Activated CD4-positive, alpha-beta T cell treated with anti-CD3 and anti-CD28 coated beads for 36 hours (primary cell): ENCODE measurements at regions of chr1 and their contacts with region 1.

Region 1: DNA sequence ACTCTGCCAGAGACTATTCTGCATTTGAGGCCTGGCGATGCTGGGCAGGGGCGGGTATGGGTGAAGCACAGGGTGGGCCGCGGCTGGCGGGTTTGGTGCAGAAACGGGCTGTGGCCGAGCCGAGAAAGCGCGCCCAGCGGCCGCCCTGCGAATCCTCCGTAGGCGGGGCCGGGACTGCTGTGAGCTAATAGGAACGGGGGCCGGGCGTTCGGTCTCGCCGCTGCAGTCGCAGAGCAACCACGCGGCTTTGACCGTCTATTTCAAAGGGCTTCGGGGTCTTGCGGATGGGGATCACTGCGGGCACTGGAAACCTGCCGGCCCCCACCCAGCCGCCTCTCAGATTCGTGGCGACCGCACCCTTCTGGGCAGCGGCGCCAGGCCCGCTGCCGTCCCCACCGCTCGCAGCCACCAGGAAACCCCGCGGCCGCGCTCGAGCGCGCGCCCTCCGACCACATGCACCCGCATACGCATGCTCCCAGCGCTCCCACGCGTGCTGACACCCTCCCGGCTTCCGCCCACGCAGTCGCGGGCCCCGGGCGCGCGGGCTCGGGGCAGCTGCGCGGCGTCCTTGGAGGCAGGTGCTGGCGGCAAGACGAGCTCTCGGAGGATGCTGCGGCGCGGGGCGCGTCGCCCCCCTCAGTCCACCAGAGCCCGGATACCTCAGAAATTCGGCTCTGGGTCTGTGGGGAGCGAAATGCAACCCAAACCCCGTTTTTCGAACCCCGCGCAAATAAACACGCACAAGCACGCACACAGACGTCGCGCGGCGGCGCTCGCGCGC is 32.6 kb downstream of the DNTTIP2 start:
- DNase-seq: peak; percentile 87
- ATAC-seq: peak; percentile 26
- H3K4me3 Mint-ChIP-seq: peak overlapping the region; percentile 90
- H3K27ac Mint-ChIP-seq: peak overlapping the region; percentile 88
- H3K4me1 Mint-ChIP-seq: peaks cover 20% of the 10 kb centered on the region
- H3K27me3 Mint-ChIP-seq: no peaks in the 10 kb centered on the region

Region 2: DNA sequence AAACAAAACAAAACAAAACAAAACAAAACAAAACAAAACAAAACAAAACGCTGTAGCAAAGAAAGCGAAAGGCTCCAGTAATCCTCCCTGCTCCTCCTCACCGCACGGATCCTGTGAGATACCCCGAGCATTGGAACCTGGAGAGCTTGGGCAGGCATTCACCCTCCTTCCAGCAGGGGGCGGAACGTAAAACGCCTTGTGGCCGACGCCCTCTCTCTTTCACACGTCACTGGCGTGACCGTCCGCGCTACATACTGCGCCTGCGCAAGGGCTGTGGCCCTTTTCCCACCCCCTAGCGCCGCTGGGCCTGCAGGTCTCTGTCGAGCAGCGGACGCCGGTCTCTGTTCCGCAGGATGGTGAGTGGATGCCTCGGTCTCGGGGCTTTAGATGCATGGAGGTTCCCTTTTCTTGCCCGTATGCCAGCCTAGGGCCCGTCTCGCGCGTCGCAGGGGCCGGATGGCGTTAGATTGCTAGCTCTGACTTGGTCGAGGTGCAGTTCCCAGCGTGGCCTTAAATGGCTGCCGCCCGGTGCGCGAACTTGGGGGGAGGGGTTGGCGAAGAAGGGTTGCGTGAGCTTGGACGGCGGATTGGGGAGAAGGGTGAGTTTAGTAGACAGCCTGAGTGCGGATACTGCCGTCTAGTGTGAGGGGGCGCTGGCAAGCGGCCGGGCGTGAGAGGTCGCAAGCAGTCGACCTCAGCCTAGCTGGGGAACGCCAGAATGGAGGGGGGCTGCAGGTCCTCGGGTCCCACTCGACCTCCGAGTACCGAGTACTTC is 1014.5 kb before region 1 on chr1 and contains the start of gene RPL5:
- CTCF ChIA-PET with region 1: no interaction called
- POLR2A ChIA-PET with region 1: no interaction called
- intact Hi-C with region 1: loop called in 1 of 2 experiments (anchors 10 kb)
- DNase-seq: peak; percentile 98
- ATAC-seq: peak; percentile 88
- H3K4me3 Mint-ChIP-seq: peak within 1 kb of the TSS; percentile 84
- H3K27ac Mint-ChIP-seq: peak within 1 kb of the TSS; percentile 95
- H3K4me1 Mint-ChIP-seq: peaks cover 35% of the 10 kb centered on the region
- H3K27me3 Mint-ChIP-seq: no peaks in the 10 kb centered on the region
- total RNA-seq, gene RPL5: 1,359 to 1,602 TPM

Region 3: GRCh38 chr1:93304716-93305138 is 541.7 kb before region 1 on chr1:
- CTCF ChIA-PET with region 1: interaction called, 4 read pairs
- POLR2A ChIA-PET with region 1: no interaction called
- intact Hi-C with region 1: loop called in 1 of 2 experiments (anchors 10 kb)
- DNase-seq: peak; percentile 43
- ATAC-seq: peak; percentile 44
- H3K4me3 Mint-ChIP-seq: no peak overlapping the region
- H3K27ac Mint-ChIP-seq: no peak overlapping the region
- H3K4me1 Mint-ChIP-seq: no peaks in the 10 kb centered on the region
- H3K27me3 Mint-ChIP-seq: no peaks in the 10 kb centered on the region

Region 4: GRCh38 chr1:93399806-93400205 is 446.6 kb before region 1 on chr1:
- CTCF ChIA-PET with region 1: no interaction called
- POLR2A ChIA-PET with region 1: no interaction called
- intact Hi-C with region 1: no loop called
- DNase-seq: no peak
- ATAC-seq: no peak
- H3K4me3 Mint-ChIP-seq: no peak overlapping the region
- H3K27ac Mint-ChIP-seq: no peak overlapping the region
- H3K4me1 Mint-ChIP-seq: no peaks in the 10 kb centered on the region
- H3K27me3 Mint-ChIP-seq: no peaks in the 10 kb centered on the region

Region 5: GRCh38 chr1:93607814-93608186 is 238.6 kb before region 1 on chr1:
- CTCF ChIA-PET with region 1: interaction called, 10 read pairs
- POLR2A ChIA-PET with region 1: interaction called, 10 read pairs
- intact Hi-C with region 1: loop called in 1 of 2 experiments (anchors 2 kb)
- DNase-seq: peak; percentile 82
- ATAC-seq: peak; percentile 95
- H3K4me3 Mint-ChIP-seq: no peak overlapping the region
- H3K27ac Mint-ChIP-seq: peak overlapping the region; percentile 63
- H3K4me1 Mint-ChIP-seq: peaks cover 43% of the 10 kb centered on the region
- H3K27me3 Mint-ChIP-seq: peaks cover 16% of the 10 kb centered on the region

Region 6: DNA sequence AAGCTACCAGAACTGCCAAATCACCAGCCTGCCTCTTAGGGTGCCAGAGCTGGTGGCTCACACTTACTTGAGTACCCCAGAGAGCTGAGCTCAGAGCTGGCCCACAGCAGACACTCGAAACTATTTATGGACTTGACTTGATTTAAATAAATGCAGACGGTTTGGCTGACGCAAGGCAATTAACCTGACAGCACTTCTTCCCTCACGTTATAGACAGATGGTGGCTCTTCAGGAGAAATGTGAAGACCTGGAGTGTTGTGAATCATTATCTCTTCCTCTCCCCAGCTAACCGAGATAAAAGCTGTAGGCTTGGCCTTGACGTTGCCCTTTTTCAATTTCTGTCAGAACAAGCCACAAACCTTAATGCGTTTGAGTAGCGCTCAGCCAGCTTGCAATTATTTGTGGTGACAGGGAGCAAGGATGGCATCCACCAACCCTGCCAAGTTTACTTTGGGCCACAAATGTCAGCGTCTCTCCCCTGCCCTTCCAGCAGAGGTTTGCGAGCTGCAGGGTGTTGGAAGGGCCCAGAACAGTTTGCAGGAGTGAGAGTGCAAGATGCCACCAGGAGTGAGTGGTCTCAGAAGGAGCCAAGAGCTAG is 130.8 kb before region 1 on chr1:
- CTCF ChIA-PET with region 1: interaction called, 5 read pairs
- POLR2A ChIA-PET with region 1: no interaction called
- intact Hi-C with region 1: loop called in 1 of 2 experiments (anchors 1 kb)
- DNase-seq: peak; percentile 61
- ATAC-seq: peak; percentile 73
- H3K4me3 Mint-ChIP-seq: no peak overlapping the region
- H3K27ac Mint-ChIP-seq: no peak overlapping the region
- H3K4me1 Mint-ChIP-seq: peaks cover 44% of the 10 kb centered on the region
- H3K27me3 Mint-ChIP-seq: peaks cover 12% of the 10 kb centered on the region

Region 7: GRCh38 chr1:93734999-93735398 is 111.4 kb before region 1 on chr1:
- CTCF ChIA-PET with region 1: no interaction called
- POLR2A ChIA-PET with region 1: no interaction called
- intact Hi-C with region 1: no loop called
- DNase-seq: no peak
- ATAC-seq: no peak
- H3K4me3 Mint-ChIP-seq: no peak overlapping the region
- H3K27ac Mint-ChIP-seq: no peak overlapping the region
- H3K4me1 Mint-ChIP-seq: no peaks in the 10 kb centered on the region
- H3K27me3 Mint-ChIP-seq: no peaks in the 10 kb centered on the region

Region 8: DNA sequence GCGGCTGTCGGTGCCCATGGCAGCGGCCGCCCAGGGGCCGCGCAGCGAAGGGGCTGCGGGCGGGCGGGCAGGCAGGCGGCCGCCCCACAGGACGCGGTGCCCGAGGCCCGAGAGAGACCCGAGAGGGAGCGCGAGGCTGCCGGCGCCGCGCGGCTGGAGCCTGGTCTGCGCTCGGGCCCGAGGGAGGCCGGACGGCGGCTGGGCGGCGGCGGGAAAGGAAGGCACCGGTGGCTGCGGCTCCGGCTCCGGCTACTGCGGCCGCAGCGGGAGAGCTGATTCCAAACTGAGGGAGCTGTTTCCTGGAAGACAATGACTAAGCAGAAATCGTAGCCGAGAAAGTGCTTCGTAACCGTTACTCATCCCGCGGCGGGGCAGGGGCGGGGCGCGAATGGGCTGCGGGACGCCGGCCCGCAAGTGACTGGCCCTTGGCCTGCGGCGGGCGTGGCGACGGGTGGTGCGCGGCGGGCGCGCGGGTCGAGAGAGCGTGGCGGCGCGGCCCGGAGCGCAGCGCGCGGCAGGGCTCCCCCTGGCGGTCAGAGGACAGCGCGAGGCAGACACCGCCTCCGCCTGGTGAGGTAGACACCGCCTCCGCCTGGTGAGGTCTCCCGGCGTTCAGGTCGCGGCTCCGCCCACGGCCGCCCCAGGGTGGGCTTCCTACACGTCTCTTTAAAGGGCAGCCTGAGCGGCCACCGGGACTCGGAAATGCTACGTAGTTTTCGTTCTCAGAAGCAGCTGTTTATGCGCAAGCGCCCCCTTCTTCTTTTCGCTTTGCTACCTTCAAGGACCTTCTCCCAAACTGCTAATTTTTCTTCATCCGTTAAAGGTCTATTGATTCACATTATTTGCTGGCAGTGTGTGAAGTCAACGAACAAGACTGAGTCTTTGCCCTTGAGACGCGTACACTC is 63.0 kb after region 1 on chr1 and contains the start of gene GCLM:
- CTCF ChIA-PET with region 1: interaction called, 7 read pairs
- POLR2A ChIA-PET with region 1: no interaction called
- intact Hi-C with region 1: loop called (anchors 1 kb)
- DNase-seq: peak; percentile 93
- ATAC-seq: peak; percentile 84
- H3K4me3 Mint-ChIP-seq: peak within 1 kb of the TSS; percentile 96
- H3K27ac Mint-ChIP-seq: peak within 1 kb of the TSS; percentile 97
- H3K4me1 Mint-ChIP-seq: peaks cover 34% of the 10 kb centered on the region
- H3K27me3 Mint-ChIP-seq: peaks cover 5% of the 10 kb centered on the region
- total RNA-seq, gene GCLM: 12.8 to 19.2 TPM